ENCODE measurements at regions of chr19 and their contacts with region 1.

Region 1: DNA sequence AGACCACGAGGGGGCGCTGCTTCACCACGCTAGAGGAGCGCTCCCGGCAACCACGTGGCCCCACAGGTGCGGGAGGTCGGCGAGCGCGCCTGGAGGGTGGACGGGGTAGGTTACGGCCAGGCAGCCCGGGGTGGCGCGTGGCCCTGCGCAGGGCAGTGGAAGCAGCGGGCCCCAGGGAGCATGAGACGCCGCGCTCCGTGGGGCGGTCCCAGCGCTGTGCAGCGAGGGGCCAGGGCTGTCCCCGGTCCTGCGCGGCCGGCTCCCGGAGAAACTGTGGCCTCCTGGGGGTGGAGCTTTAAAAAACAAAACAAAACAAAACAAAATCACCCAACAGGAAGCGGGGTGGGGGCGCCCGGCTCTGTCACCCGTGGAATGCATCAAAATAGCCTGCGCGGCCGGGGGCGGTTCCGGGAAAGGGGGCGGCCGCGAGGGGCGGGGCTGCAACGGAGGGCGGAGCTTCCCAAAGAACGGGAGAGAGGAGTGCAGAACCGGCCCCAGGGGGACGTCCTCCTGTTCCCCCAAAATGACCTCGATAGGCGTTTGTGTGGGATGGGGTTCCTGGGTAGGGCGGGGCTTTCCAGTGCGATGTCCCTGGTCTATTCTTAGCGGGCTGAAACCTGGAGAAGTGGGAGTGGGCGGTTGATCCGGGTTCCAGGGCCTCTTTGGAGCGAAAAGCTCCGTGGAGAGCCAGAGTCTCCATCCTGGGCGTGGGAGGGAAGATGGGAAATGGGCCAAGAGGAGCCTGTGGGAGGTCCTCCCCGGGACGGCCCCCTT is 27.3 kb downstream of the NUMBL start:
- DNase-seq: peak; percentile 61 to 93
- H3K4me3 ChIP-seq: peak overlapping the region; percentile 94
- H3K27ac ChIP-seq: peak overlapping the region; percentile 60
- H3K4me1 ChIP-seq: peaks cover 34% of the 10 kb centered on the region
- H3K27me3 ChIP-seq: no peaks in the 10 kb centered on the region
- CTCF ChIP-seq: peak; percentile 95; the same call in 1 of the 2 replicates

Region 2: DNA sequence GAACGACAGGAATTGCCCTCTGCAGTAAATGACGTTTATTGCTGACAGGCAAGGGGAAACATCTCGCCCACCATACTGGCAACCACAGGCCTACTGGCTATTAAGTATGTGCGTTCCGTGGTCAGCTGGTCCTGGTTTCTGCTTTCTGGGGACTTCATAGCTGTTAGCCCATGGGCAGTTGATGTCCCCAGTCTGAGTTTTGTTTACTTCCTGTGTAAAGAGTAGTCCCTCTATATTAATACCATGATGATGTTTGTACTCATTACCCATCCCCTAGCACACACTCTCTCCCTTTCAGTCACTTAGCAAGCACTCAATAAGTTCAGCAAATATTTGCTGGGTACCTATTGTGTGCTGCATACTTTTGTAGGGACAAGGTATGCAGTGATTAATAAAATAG is 105.8 kb after region 1 on chr19:
- CTCF ChIA-PET with region 1: interaction called, 10 read pairs
- POLR2A ChIA-PET with region 1: no interaction called
- intact Hi-C with region 1: no loop called
- DNase-seq: no peak
- H3K4me3 ChIP-seq: no peak overlapping the region
- H3K27ac ChIP-seq: no peak overlapping the region
- H3K4me1 ChIP-seq: no peaks in the 10 kb centered on the region
- H3K27me3 ChIP-seq: no peaks in the 10 kb centered on the region
- CTCF ChIP-seq: no peak

Region 3: GRCh38 chr19:40896418-40896796 is 233.3 kb after region 1 on chr19:
- CTCF ChIA-PET with region 1: interaction called, 18 read pairs
- POLR2A ChIA-PET with region 1: no interaction called
- intact Hi-C with region 1: no loop called
- DNase-seq: no peak
- H3K4me3 ChIP-seq: no peak overlapping the region
- H3K27ac ChIP-seq: peak overlapping the region; percentile 82; the same call in 1 of the 2 replicates
- H3K4me1 ChIP-seq: peaks cover 16% of the 10 kb centered on the region
- H3K27me3 ChIP-seq: no peaks in the 10 kb centered on the region
- CTCF ChIP-seq: no peak

Region 4: GRCh38 chr19:41161903-41162302 is 498.8 kb after region 1 on chr19:
- CTCF ChIA-PET with region 1: no interaction called
- POLR2A ChIA-PET with region 1: interaction called, 11 read pairs
- intact Hi-C with region 1: no loop called
- DNase-seq: no peak
- H3K4me3 ChIP-seq: no peak overlapping the region
- H3K27ac ChIP-seq: no peak overlapping the region
- H3K4me1 ChIP-seq: peaks cover 17% of the 10 kb centered on the region
- H3K27me3 ChIP-seq: no peaks in the 10 kb centered on the region
- CTCF ChIP-seq: peak; percentile 40; the same call in 1 of the 2 replicates

Region 5: DNA sequence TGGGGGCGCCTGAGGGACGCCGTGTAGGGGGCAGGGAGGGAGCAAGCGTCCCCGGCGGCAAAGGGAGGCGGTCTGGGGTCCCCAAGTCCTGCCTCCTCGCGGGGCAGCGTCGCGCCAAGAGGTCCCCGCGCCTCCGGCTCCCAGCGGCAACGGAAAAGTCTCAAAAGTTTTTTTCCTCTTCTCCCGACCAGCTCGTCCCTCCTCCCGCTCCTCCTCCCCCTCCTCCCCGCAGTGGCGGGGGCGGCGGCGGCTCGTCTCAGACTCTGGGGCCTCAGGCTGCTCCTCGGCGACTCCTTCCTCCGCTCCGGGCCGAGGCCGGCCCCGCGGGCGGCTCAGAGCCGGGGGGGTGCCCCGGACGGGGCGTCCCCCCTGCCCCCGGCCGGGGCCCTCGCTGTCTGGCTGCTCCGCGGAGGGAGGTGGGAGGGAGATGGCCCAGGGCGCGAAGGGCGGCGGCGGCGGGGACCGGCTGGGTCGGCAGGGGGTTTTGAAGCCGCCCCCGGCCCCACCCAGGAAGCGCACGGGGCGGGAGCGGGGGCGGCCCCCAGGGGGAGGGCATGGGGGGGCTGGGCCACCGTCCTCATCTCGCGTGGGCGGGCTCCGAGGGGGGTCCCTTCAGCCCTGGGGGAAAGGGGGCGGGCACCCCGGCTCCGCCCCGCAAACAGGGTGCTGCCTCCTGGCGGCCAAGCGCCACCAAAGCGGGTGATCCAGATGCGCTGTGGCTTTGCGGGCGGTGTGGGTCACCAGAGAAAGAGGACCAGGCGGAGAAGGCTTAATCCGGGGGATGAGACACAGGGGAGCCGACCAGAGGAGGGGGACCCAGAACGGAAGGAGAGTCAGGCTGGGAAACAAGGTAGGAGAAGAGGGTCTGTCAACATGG is 690.6 kb after region 1 on chr19 and contains the start of gene TGFB1:
- CTCF ChIA-PET with region 1: no interaction called
- POLR2A ChIA-PET with region 1: no interaction called
- intact Hi-C with region 1: loop called (anchors 5 kb)
- DNase-seq: peak; percentile 39 to 91
- H3K4me3 ChIP-seq: peak within 1 kb of the TSS; percentile 80
- H3K27ac ChIP-seq: no peak within 1 kb of the TSS
- H3K4me1 ChIP-seq: peaks cover 15% of the 10 kb centered on the region
- H3K27me3 ChIP-seq: no peaks in the 10 kb centered on the region
- CTCF ChIP-seq: peak; percentile 79
- total RNA-seq, gene TGFB1: 67.9 and 74.9 TPM in 2 replicates

Measured in PC-9 (cell line).